ENCODE measurements at regions of chr5 and their contacts with region 1.

Region 1: DNA sequence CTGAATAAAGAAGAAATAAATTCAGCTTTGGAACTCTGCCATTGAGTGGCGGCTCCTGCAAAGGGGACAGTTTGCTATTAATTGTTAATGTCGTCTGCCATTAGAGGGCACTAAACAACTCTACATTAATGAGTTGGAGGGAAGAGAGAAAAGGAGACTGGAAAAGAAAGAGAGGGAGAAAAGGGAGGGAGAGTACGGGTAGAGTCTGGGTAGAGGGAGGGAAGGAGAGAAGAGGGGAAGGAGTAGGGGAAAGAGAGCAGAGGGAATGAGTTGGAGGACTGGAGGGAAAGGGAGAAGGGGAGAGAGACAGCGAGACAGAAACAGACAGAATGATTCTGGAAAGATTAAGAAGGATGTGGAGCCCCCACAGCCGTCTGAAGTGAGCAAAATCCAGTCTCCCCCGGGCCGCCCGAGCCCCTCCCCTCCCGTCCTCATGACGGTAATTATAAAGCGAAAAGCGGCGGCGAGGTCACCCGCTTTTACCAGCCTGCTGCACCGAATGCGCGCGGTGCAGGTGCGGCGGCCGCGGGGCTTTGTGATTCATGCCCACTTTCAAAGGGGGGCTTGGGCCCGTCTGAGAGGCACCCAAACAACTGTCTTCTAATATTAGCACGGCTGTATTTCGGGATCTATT is 1.9 kb upstream of the FST start:
- DNase-seq: peak; percentile 42
- H3K4me3 ChIP-seq: peak overlapping the region; percentile 63 to 76
- H3K27ac ChIP-seq: no peak overlapping the region
- H3K4me1 ChIP-seq: no peaks in the 10 kb centered on the region
- H3K27me3 ChIP-seq: no peaks in the 10 kb centered on the region
- CTCF ChIP-seq: peak in 2 of 3 experiments; percentile 36 to 59
- POLR2A ChIP-seq: no peak

Region 2: DNA sequence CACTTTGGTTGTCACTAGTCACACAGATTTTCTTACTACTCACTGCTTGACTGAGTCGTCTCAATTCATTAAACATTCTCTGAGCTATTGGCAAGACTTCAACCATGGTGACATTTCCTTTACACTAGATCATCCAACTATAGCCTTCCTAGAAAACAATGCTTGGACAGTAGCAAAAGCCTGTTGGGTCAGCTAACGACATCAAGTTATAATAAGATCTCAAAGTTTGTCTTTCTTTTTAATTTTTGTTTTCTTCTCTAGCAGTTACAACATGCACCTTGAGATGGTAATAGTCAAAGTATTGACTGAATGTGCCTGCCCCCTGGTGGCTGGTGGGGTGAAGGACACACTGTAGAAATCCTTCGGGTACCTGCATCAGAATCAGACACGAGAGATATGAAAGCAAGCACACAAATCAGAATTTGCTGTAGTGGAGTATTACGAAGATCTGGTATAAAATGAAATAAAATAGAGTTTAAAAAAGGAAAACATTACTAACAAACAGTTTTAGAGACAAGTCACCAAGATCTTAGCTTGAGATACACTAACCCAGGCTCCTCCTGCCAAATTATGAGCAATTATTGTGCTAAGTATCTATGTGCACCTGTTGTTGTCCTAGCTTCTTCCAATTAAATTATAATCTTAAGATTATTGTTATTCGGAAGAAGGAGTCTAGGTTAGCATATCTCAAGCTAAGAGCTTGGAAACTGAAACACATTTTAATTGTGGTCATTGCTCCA is 750.7 kb after region 1 on chr5:
- intact Hi-C with region 1: loop called (anchors 10 kb)
- DNase-seq: peak; percentile 84
- H3K4me3 ChIP-seq: no peak overlapping the region
- H3K27ac ChIP-seq: no peak overlapping the region
- H3K4me1 ChIP-seq: no peaks in the 10 kb centered on the region
- H3K27me3 ChIP-seq: no peaks in the 10 kb centered on the region
- CTCF ChIP-seq: peak; percentile 83 to 96 (median 86)
- POLR2A ChIP-seq: no peak

Region 3: GRCh38 chr5:55286411-55286933 is 1807.9 kb after region 1 on chr5:
- intact Hi-C with region 1: no loop called
- DNase-seq: no peak
- H3K4me3 ChIP-seq: no peak overlapping the region
- H3K27ac ChIP-seq: no peak overlapping the region
- H3K4me1 ChIP-seq: no peaks in the 10 kb centered on the region
- H3K27me3 ChIP-seq: no peaks in the 10 kb centered on the region
- CTCF ChIP-seq: no peak
- POLR2A ChIP-seq: no peak